Heart right ventricle (tissue), 16 donors: ENCODE measurements at regions of chr12 and their contacts with region 1.

Region 1: DNA sequence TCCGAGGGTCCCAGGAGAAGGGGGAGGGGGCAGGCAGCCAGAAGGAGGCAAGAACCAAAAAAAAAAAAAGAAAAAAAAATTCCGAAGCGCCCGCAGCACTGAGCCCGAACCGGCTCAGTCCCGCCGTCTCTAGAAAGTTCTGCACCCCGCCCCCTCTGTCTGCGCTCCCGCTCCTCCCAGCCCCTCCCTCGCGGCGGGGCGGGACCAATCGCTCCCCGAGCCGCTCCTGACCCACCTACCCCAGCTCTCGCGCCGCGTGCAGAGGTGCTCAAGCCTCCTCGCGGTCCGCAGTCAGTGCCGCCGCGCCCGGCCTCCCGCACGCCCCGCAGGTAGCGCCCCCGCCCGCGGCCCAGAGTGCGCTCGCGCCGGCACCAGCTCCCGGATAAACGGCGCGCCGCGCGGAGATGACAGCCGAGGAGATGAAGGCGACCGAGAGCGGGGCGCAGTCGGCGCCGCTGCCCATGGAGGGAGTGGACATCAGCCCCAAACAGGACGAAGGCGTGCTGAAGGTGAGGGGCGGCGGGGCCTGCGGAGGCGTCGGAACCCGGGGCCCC is at the start of gene FKBP4:
- DNase-seq: peak; percentile 90 to 91
- ATAC-seq: peak; percentile 85 to 95 (median 94)
- H3K4me3 ChIP-seq: peak within 1 kb of the TSS; percentile 63 to 91 (median 82)
- H3K27ac ChIP-seq: peak within 1 kb of the TSS; percentile 63 to 86 (median 81)
- H3K4me1 ChIP-seq: peaks cover 12 to 43% (median 33%) of the 10 kb centered on the region in 9 donors
- H3K27me3 ChIP-seq: no peaks in the 10 kb centered on the region
- CTCF ChIP-seq: peak in 1 of 9 donors; percentile 7
- total RNA-seq, gene FKBP4: 26.7 to 65.8 (median 49.1) TPM

Region 2: GRCh38 chr12:2739817-2740641 is 54.8 kb before region 1 on chr12:
- intact Hi-C with region 1: no loop called
- DNase-seq: no peak
- ATAC-seq: no peak
- H3K4me3 ChIP-seq: no peak overlapping the region
- H3K27ac ChIP-seq: no peak overlapping the region
- H3K4me1 ChIP-seq: peaks cover 0 to 4% (median 0%) of the 10 kb centered on the region in 9 donors
- H3K27me3 ChIP-seq: peaks cover 0 to 1% (median 0%) of the 10 kb centered on the region in 7 donors
- CTCF ChIP-seq: peak in 8 of 9 donors; percentile 25 to 64 (median 56)

Region 3: GRCh38 chr12:2812290-2813213 is 17.7 kb after region 1 on chr12 and contains the start of gene ITFG2:
- intact Hi-C with region 1: loop called in 2 of 10 experiments (anchors 2 kb)
- DNase-seq: peak; percentile 98 to 99
- ATAC-seq: peak; percentile 97 to 99 (median 98)
- H3K4me3 ChIP-seq: peak within 1 kb of the TSS; percentile 36 to 88 (median 70)
- H3K27ac ChIP-seq: peak within 1 kb of the TSS; percentile 83 to 99 (median 92)
- H3K4me1 ChIP-seq: peaks cover 3 to 26% (median 21%) of the 10 kb centered on the region in 9 donors
- H3K27me3 ChIP-seq: no peaks in the 10 kb centered on the region
- CTCF ChIP-seq: peak in 1 of 9 donors; percentile 16
- total RNA-seq, gene ITFG2: 10.9 to 20.4 (median 13.3) TPM

Region 4: GRCh38 chr12:3252450-3252891 is 457.7 kb after region 1 on chr12:
- intact Hi-C with region 1: no loop called
- DNase-seq: peak; percentile 81 to 93
- ATAC-seq: peak; percentile 50 to 68 (median 60)
- H3K4me3 ChIP-seq: peak overlapping the region in 1 of 10 donors; percentile 0
- H3K27ac ChIP-seq: peak overlapping the region; percentile 76 to 99 (median 89)
- H3K4me1 ChIP-seq: peaks cover 62 to 100% (median 87%) of the 10 kb centered on the region in 9 donors
- H3K27me3 ChIP-seq: no peaks in the 10 kb centered on the region
- CTCF ChIP-seq: no peak